Lower leg skin (tissue), 4 donors: ENCODE measurements at regions of chr21 and their contacts with region 1.

Region 1: GRCh38 chr21:37257967-37258877 is 8.9 kb downstream of the VPS26C start:
- DNase-seq: peak in 1 of 2 donors; percentile 36
- H3K4me3 ChIP-seq: peak overlapping the region; percentile 20
- CTCF ChIP-seq: no peak
- POLR2A ChIP-seq: no peak

Region 2: GRCh38 chr21:37445228-37445627 is 187.0 kb after region 1 on chr21:
- intact Hi-C with region 1: loop called (anchors 10 kb)
- DNase-seq: no peak
- H3K4me3 ChIP-seq: no peak overlapping the region
- CTCF ChIP-seq: no peak
- POLR2A ChIP-seq: no peak